ENCODE measurements at regions of chr22 and their contacts with region 1.

Region 1: DNA sequence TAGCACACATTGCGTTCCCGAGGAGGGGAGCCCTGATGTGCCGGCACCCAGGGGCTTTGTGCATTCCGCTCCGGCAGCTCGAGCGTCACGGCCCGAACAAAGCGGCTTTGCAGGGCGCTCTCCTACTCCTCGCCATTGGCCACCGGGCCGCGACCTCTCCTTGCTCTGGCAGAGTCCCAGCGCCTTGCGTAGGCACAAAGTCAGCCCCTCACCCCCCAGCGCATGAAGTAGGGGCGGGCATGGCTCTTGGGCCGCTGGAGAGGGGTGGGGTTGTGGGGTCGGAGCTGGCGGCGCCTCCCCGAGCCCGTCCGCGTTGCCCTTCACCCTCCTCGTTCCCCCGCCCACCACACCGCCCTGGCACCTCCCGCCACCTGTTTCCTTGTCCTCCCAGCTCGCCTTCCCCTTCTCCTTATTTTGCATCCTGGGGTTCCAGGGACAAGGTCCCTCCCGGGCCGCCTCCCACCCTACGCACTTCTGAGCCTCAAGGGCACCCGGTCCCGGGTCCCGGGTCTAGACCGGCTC is 753 bp upstream of the PPARA start:
- DNase-seq: no peak

Region 2: GRCh38 chr22:46013460-46014416 is 135.8 kb before region 1 on chr22:
- in situ Hi-C with region 1: loop called (anchors 25 kb)
- DNase-seq: peak; percentile 93

Region 3: DNA sequence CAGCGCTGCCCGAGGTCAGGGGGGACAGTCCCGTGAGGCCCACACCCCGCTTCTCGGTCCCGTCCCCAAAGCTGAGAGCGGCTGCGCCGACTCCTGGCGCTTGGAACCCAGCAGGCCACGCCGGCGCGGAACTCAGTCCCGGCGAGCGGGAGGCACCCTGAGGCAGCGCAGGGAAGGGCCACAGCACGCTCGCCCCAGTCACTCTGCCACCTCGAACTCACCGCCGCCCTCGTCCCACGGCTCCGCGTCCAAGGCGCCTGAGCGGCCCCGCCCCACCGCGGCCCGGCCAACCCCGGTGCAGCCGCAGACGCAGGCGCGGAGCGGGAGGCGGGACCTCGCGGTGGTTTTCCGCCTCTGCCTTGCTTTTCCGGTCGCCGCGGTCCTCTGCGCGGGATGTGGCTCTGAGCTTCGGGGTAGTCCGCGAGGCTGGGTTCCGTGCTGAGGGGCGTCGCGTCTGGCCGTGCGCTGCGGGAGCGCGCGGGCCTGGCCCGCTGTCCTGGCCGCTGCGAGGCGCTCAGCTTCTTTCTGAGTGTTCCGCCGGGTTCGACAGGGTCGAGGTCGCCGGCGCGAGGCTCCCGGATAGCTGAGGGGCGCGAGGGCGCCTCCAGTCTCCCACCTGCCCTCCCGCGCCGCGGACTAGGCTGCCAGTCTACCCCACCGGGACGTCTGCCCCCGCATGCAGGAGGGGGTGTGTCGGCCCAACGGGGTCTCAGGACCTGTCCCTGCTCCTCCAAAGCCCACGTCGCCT is 100.6 kb after region 1 on chr22 and contains the start of gene CDPF1:
- in situ Hi-C with region 1: loop called (anchors 25 kb)
- DNase-seq: peak; percentile 86
- total RNA-seq, gene CDPF1: 24.4 and 29.2 TPM in 2 replicates

Region 4: DNA sequence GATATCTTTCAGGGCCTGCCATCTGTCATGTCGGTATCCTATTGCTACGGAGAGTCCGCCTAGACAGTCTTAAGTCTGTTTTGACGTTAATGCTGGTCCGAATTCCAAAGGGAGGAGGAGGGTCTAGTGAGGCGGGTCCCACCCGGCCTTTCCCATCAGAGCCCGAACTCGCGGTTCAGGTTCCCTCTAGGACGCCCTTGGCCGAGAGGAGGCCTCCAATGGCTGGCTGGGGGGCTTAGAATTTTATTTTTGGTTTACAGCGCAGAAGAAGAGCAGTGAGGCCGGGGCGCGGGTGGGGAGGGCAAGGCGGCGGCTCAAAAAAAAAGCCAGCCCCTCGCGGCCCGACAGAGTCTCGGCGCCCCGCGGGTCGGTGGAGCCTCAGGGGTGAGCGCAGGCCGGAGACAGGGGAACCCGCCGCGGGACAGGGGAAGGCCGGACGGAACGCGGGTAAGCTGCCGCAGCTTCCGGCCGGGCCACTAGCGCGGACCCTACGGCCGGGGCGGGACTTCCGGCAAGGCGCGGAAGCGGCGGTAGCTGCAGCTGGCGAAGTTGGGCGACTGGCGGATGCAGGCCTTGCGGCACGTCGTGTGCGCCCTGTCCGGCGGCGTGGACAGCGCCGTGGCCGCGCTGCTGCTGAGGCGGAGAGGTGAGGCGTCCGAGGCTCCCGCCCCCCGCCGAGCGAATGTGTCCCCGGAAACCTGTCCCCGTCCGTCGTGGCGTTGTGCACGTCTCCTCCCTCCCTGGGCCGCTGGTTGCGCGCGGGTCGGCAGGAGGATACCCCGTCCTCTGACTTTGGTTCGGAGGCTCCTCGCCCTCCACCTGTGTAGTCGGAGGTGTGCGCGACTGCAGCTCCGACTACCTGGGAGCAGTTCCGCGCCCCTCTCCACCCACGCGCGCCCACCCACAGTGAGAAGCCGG is 185.9 kb after region 1 on chr22 and contains the start of gene TRMU:
- in situ Hi-C with region 1: loop called (anchors 10 kb)
- DNase-seq: peak; percentile 84
- total RNA-seq, gene TRMU: 58.4 and 61.3 TPM in 2 replicates

Region 5: GRCh38 chr22:46436595-46437175 is 287.1 kb after region 1 on chr22:
- in situ Hi-C with region 1: no loop called
- DNase-seq: no peak

Region 6: DNA sequence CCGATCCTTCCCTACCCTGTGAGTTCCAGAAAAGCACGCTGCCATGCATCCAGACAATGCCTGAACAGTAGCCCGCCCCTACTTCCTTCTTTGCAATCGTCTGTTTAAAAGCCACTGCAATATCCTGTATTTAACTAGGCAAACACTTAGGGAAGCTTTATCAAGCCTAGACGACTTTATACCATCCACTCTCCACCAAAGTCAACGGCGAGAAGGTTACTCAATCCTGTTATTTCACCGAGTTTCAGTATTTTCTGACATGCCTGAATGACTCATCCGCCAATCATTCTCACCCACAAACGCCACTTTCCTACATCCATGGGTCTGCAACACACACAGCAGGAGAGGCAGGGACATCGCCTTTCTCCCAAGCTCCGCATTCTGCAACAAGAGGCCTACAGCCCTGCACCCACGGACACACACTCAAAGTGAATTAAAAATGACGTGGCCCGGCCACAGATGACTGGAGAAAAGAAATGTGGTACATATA is 378.6 kb after region 1 on chr22:
- in situ Hi-C with region 1: no loop called
- DNase-seq: peak; percentile 53

Measured in SK-MEL-5 (cell line).